ENCODE measurements at regions of chr19 and their contacts with region 1.

Region 1: GRCh38 chr19:13172068-13172896 is 22.1 kb downstream of the IER2 start:
- DNase-seq: no peak
- H3K4me3 Mint-ChIP-seq: peak overlapping the region; percentile 82
- H3K27ac Mint-ChIP-seq: peak overlapping the region; percentile 95
- H3K4me1 Mint-ChIP-seq: peaks cover 54% of the 10 kb centered on the region
- H3K27me3 Mint-ChIP-seq: no peaks in the 10 kb centered on the region

Region 2: GRCh38 chr19:13051267-13052165 is 120.8 kb before region 1 on chr19:
- intact Hi-C with region 1: no loop called
- DNase-seq: no peak
- H3K4me3 Mint-ChIP-seq: no peak overlapping the region
- H3K27ac Mint-ChIP-seq: no peak overlapping the region
- H3K4me1 Mint-ChIP-seq: no peaks in the 10 kb centered on the region
- H3K27me3 Mint-ChIP-seq: peaks cover 20% of the 10 kb centered on the region

Region 3: GRCh38 chr19:13195678-13196077 is 23.4 kb after region 1 on chr19:
- intact Hi-C with region 1: loop called (anchors 2 kb)
- DNase-seq: peak; percentile 32
- H3K4me3 Mint-ChIP-seq: no peak overlapping the region
- H3K27ac Mint-ChIP-seq: no peak overlapping the region
- H3K4me1 Mint-ChIP-seq: peaks cover 15% of the 10 kb centered on the region
- H3K27me3 Mint-ChIP-seq: no peaks in the 10 kb centered on the region

Region 4: GRCh38 chr19:13228561-13228960 is 56.3 kb after region 1 on chr19:
- intact Hi-C with region 1: no loop called
- DNase-seq: no peak
- H3K4me3 Mint-ChIP-seq: no peak overlapping the region
- H3K27ac Mint-ChIP-seq: no peak overlapping the region
- H3K4me1 Mint-ChIP-seq: no peaks in the 10 kb centered on the region
- H3K27me3 Mint-ChIP-seq: peaks cover 16% of the 10 kb centered on the region

Measured in activated T-helper 1 cell treated with anti-CD3 and anti-CD28 coated beads, Interleukin-12 subunit alpha, Interleukin-12 subunit beta, Interleukin-2, Interleukin-4 antibody, amounts not matched to agents 30 ng/mL and 10 ng/mL and 1 ng/mL, durations not matched to agents 14 hours and 24 hours and 36 hours (primary cell).